Gastrocnemius medialis (tissue), 4 donors: ENCODE measurements at regions of chr19 and their contacts with region 1.

Region 1: GRCh38 chr19:35352448-35353304 is 5.0 kb downstream of the FFAR1 start:
- DNase-seq: no peak
- ATAC-seq: no peak
- H3K4me3 ChIP-seq: no peak overlapping the region
- H3K27ac ChIP-seq: no peak overlapping the region
- H3K4me1 ChIP-seq: no peaks in the 10 kb centered on the region
- H3K27me3 ChIP-seq: no peaks in the 10 kb centered on the region
- CTCF ChIP-seq: peak; percentile 6 to 52 (median 48)
- POLR2A ChIP-seq: no peak

Region 2: GRCh38 chr19:35468637-35469036 is 116.0 kb after region 1 on chr19:
- in situ Hi-C with region 1: loop called in 1 of 4 experiments (anchors 10 kb)
- intact Hi-C with region 1: loop called (anchors 2 kb)
- DNase-seq: no peak
- ATAC-seq: peak in 1 of 2 donors; percentile 18
- H3K4me3 ChIP-seq: no peak overlapping the region
- H3K27ac ChIP-seq: no peak overlapping the region
- H3K4me1 ChIP-seq: no peaks in the 10 kb centered on the region
- H3K27me3 ChIP-seq: no peaks in the 10 kb centered on the region
- CTCF ChIP-seq: peak in 4 of 5 experiments; percentile 15 to 37 (median 34)
- POLR2A ChIP-seq: no peak

Region 3: GRCh38 chr19:35476149-35476548 is 123.5 kb after region 1 on chr19:
- in situ Hi-C with region 1: loop called in 1 of 4 experiments (anchors 10 kb)
- intact Hi-C with region 1: no loop called
- DNase-seq: no peak
- ATAC-seq: no peak
- H3K4me3 ChIP-seq: no peak overlapping the region
- H3K27ac ChIP-seq: no peak overlapping the region
- H3K4me1 ChIP-seq: no peaks in the 10 kb centered on the region
- H3K27me3 ChIP-seq: no peaks in the 10 kb centered on the region
- CTCF ChIP-seq: no peak
- POLR2A ChIP-seq: no peak

Region 4: DNA sequence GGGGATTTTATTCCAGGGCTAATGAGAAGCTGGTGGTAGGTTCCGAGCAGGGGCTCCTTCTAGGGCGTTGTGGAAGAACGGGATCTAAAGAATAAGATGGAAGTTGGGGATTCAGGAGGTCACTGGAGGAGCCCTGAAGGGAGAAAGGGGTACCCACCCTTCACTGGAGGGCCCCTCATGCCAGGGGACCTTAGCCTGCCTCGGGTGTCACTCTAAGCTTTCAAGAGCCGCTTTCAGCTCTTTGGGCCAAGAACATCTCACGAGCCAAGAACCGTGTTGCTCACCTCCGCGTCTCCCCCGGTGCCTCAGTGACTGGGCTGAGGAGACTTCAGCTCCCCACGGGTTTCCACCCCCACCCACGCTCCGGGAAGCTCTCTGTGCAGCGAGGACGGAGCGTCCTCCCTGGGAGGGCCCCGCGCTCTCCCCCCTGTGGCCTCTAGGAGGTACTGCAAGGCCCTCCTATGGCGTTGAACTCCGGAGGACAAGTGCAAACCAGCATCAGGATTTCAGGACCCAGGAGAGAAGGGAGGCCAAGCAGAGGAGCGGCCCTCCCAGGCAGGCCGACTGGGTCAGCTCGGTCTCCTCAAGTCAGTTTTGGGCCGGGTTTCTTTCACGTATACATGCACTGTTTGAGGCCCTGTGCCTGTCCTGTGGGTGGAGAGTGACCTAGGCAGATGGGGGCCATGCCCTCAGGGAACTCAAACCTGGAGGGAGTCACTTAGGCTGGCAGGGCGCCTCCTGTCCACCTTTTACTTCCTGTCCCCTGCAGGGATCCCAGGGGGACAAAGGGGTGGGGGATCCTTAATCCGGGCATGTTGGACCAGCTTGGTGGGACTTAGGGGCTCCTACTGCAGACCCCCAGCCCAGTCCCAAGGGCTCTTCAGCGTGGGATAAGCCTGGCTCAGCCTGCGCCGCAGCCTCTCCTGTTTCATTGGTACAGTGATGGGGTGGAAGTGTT is 142.7 kb after region 1 on chr19:
- in situ Hi-C with region 1: loop called in 1 of 4 experiments (anchors 10 kb)
- intact Hi-C with region 1: loop called (anchors 10 kb)
- DNase-seq: peak; percentile 11 to 24
- ATAC-seq: peak; percentile 73 to 82
- H3K4me3 ChIP-seq: peak overlapping the region in 1 of 4 donors; percentile 7
- H3K27ac ChIP-seq: no peak overlapping the region
- H3K4me1 ChIP-seq: peaks cover 0 to 3% of the 10 kb centered on the region in 2 donors
- H3K27me3 ChIP-seq: peaks cover 0 to 5% (median 0%) of the 10 kb centered on the region in 3 donors
- CTCF ChIP-seq: peak; percentile 75 to 95 (median 83)
- POLR2A ChIP-seq: no peak